ENCODE measurements at regions of chr17 and their contacts with region 1.

Region 1: DNA sequence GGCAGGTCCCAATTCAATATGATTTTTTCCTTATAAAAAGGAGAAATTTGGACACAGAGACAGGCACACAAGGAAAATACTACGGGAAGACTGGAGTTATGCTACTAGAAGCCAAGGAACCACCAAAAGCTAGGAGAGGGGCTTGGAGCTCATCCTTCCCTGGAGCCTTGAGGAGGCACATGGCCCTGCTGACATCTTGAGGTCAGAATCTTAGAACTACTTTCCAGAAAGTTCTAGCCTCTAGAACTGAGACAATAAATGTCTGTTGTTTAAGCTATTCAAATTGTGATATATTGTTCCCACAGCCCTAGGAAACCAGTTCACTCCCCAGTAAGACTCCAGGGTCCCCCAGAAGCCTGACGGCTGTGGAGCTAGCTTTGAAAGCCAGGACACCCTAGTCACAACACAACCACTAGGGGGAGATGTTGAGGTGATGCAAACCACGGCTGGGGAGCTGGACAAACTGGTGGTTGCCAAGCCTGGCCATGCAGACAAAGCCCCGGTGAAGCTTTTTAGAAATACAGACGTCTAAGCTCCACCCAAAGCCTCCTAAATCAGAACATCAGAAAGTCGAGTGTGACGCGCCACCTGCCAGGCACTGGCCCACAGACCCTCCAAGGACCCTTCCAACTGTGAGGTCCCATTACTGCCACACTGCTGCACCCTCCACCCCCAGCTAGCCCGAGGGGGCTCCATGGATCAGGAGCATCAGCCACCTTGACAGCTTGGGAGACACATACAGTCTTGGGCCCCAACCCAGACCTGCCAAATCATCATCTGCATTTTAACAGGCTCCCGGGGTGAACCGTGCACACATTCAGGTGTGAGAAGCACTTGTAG is 106.4 kb downstream of the SLC39A11 start:
- DNase-seq: no peak

Region 2: DNA sequence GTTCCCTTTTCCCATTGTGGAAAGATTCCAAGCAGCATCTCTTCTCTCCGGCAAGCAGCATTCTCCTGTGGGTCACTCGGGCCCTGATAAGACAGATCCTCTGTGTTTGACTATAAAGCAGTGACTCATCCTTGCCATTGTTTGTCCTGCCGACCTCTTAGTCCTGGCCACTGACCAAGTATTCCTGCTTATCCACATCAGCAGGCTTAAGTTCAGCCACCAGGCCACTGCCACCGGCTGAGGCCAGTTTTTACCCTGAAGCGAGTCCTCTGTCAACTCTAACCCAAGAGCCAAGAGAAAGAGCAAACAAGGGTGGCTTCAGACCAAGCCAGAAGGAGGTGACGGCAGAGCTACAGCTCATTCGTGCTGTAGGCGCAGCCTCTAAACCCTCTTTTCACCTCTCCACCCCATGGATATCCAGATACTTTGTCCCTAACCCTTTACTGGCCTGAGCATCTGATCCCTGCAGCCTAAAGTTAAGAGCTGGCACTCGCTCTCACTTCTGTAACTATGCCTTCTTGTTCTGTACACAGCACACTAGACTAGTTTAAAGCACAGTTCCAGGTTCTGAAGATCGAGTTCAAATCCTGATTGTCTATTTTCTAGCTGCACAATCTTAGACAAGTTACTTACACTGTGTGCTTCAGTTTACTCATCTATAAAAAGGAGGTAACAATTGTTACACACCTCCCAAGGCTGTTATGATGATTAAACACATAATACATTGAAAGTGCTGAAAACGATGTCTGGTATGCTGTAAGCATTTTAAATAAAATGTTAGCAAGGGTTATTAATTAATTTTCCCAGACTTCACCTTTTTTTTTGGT is 834.3 kb before region 1 on chr17:
- intact Hi-C with region 1: no loop called
- DNase-seq: peak; percentile 80

Region 3: GRCh38 chr17:73092523-73093135 is 106.5 kb after region 1 on chr17 and contains the start of gene SLC39A11:
- intact Hi-C with region 1: loop called in 1 of 2 experiments (anchors 10 kb)
- DNase-seq: peak; percentile 98
- total RNA-seq, gene SLC39A11: 20.6 to 25.8 TPM

Region 4: DNA sequence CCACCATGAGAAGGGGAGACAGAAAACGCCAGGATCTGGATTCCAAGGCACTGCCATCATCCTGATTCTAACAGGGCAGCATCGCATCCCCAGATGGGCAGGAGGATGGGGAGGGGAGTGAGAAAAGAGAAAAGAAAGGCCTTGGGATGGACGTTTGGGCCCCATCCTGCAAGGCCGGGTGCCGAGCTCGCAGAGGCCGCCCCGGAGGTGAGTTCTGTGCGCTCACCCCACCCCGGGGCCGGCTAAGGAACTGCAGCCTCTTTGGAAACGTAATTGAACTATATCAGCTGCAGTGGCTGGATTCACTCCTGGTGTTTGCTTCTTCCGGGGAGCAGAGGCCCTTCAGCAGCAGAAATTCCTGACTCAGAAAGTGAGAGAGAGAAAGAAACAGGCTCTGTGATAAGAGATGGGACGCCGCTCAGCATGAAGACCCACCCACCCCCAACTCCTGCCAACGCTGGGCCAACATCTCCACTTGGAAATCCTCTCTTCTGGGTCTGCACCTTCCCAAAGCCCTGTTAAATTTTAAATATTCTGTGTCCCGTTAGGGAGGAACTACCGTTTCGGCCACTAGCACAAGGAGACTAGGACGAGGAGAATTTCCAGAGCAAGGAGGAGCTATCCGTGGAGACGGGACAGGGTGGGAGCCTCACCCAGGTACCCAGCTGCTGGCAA is 170.2 kb after region 1 on chr17:
- intact Hi-C with region 1: loop called in 1 of 2 experiments (anchors 5 kb)
- DNase-seq: peak; percentile 88

Region 5: GRCh38 chr17:73172252-73172651 is 186.2 kb after region 1 on chr17:
- intact Hi-C with region 1: loop called in 1 of 2 experiments (anchors 10 kb)
- DNase-seq: no peak